ENCODE measurements at regions of chr12 and their contacts with region 1.

Region 1: DNA sequence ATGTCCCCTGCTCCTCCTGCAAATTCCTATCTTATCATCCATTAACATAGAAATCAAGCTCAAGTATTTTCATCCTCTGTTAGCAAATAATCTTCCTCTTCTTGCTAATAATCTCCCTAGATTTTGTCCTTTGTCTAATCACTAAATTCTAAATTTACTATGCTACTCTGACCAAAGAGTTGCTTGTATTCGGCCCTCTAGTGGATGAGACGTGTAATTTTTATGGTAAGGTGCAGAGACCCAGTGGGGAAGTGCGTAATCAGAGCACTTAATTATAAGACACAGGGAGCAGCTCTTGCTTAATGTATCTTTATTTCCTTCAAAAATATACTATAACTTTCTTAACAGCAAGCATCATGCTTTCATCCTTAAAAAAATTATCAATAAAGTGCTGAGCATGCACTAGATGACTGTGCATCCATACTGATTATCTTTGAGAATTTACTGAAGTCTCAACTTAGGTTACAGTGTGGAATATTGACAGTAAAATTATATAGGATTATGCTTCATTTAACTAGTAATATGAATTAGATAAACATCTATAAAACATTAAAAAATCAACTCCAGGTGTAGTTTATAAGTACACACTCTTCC is 212.6 kb downstream of the SLC16A7 start:
- DNase-seq: no peak
- H3K4me3 ChIP-seq: no peak overlapping the region
- CTCF ChIP-seq: peak; percentile 53

Region 2: DNA sequence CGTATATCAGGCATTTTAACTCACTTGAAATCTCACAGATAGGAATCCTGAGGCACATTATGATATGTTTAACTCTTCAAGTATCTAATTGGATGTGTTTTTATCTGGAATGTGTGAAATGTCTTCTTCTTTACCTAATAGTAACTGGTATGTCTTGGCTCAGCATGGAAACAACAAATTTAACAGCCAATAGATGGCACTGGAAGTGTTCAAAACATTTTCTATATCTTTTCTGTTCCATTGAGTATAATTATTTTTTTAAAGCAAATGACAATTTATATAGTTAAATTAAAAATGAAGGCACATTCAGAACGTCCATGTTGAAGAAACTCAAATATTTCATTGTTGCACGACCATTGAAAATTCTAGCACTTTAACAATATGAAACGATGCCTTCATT is 377.1 kb before region 1 on chr12:
- CTCF ChIA-PET with region 1: interaction called, 13 read pairs
- POLR2A ChIA-PET with region 1: no interaction called
- DNase-seq: no peak
- H3K4me3 ChIP-seq: no peak overlapping the region
- CTCF ChIP-seq: peak; percentile 6

Region 3: DNA sequence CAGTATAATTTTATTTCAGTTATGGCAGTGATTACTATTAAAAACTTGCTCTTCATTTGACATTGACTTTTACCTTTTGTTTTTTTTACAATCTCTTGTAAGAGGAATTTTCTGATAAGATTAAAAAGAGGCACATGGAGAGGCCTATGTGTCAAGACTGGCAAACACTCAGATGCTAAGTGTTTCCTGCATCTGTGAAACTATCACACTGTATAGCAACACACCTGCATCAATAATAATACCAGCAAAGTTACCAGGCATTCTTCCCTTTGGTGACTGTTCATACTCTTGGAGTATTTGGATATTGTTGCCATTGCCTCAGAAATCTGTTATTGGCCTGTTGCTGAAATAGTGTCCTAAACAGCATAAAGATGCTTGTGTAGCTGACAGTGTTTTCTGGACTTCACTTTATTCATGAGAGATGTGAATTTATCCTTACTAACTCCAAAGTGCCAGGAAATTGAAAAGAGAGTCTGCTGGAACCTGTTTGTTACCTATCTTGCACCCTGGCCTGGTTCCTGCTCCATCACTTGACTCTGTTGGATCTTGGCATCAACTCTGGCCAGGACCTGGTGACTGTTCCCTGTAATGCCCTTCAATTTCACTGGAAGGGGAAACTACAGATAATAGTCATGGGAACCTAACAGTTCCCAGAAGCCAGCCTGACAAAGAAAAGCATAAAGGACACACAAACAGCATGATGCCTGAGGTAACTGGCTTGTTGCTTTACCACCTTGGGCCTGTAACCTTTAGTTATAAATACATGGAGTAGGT is 192.8 kb before region 1 on chr12:
- CTCF ChIA-PET with region 1: no interaction called
- POLR2A ChIA-PET with region 1: no interaction called
- DNase-seq: no peak
- H3K4me3 ChIP-seq: no peak overlapping the region
- CTCF ChIP-seq: no peak

Region 4: GRCh38 chr12:59820594-59821011 is 12.2 kb after region 1 on chr12:
- CTCF ChIA-PET with region 1: interaction called, 31 read pairs
- POLR2A ChIA-PET with region 1: no interaction called
- DNase-seq: peak; percentile 67
- H3K4me3 ChIP-seq: no peak overlapping the region
- CTCF ChIP-seq: no peak

Region 5: GRCh38 chr12:59834659-59835474 is 26.5 kb after region 1 on chr12:
- CTCF ChIA-PET with region 1: interaction called, 10 read pairs
- POLR2A ChIA-PET with region 1: no interaction called
- DNase-seq: no peak
- H3K4me3 ChIP-seq: no peak overlapping the region
- CTCF ChIP-seq: no peak